SK-N-SH (cell line): ENCODE measurements at regions of chr9 and their contacts with region 1.

Region 1: DNA sequence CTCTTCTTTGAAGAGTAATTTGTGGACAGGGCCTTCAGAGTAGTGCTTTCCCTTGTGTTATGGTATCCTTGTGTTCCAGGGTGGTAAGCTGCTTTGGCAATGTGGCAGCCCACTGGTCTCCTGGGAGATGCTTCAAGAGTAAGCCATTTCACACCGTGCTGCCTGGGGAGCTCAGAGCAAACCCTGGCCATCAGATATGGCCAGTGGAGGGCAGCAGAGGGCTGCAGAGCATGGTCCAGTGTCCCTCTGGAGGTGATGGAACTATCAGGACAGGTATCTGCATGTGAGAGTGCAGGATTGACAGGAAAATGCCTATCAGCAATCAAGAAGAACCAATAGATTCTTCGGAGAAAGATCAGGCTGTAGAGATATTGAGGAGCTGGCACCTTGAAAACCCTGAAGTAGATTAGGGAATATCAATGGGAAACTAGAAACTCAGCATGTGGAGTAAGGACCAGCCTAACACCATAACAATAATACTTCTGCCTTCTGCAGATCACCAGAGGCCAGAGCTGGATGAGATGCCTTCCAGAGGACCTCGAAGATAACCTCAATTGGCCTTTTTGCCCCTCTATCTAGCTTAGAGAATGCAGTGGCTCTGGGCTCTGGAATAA is 90.8 kb downstream of the PLPPR1 start:
- DNase-seq: peak; percentile 44
- H3K4me3 ChIP-seq: no peak overlapping the region; a peak in 1 of 4 replicates
- H3K27ac ChIP-seq: no peak overlapping the region
- H3K4me1 ChIP-seq: no peaks in the 10 kb centered on the region
- H3K27me3 ChIP-seq: no peaks in the 10 kb centered on the region
- CTCF ChIP-seq: peak; percentile 76
- EP300 ChIP-seq: no peak
- RAD21 ChIP-seq: peak; percentile 71

Region 2: DNA sequence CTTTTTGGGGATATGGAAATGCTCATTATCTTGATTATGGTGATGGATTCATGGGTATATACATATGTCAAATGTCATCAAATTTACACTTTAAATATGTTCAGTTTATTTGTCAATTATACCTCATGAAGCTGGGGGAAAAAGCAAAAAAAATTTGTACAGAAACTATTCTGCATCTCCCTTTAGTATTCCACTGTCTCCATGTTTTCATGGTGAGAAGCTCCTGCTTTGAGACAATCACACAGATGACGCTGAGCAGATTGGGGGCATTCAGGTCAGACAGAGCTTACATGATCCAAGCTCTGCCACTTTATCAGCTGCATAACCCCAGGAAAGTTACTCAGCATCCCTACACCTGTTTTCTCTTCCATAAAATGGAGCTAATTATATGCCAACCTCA is 10.7 kb after region 1 on chr9:
- CTCF ChIA-PET with region 1: interaction called, 17 read pairs
- POLR2A ChIA-PET with region 1: no interaction called
- DNase-seq: no peak
- H3K4me3 ChIP-seq: no peak overlapping the region
- H3K27ac ChIP-seq: no peak overlapping the region
- H3K4me1 ChIP-seq: no peaks in the 10 kb centered on the region
- H3K27me3 ChIP-seq: no peaks in the 10 kb centered on the region
- CTCF ChIP-seq: no peak
- EP300 ChIP-seq: no peak
- RAD21 ChIP-seq: no peak

Region 3: DNA sequence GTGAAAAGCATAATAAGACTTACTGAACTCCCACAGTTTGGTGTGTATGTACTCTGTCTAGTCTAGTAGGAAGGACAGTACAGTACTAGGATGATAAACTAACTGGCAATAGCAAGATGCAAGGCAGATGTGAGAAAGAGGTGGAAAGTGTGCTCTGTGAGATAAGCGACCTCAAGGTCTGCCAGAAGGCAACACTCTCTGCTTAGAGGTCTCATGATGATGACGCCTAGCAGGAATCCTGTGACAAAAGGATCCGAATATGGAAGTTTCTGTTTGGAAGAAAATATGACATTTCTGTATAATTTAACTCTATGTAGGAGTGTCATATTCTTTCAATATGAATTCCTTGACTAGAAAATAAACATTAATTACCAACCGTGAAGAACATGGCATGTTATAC is 21.5 kb after region 1 on chr9:
- CTCF ChIA-PET with region 1: no interaction called
- POLR2A ChIA-PET with region 1: no interaction called
- DNase-seq: no peak
- H3K4me3 ChIP-seq: no peak overlapping the region
- H3K27ac ChIP-seq: no peak overlapping the region
- H3K4me1 ChIP-seq: no peaks in the 10 kb centered on the region
- H3K27me3 ChIP-seq: no peaks in the 10 kb centered on the region
- CTCF ChIP-seq: no peak
- EP300 ChIP-seq: no peak
- RAD21 ChIP-seq: no peak